ENCODE measurements at regions of chr3 and their contacts with region 1.

Region 1: DNA sequence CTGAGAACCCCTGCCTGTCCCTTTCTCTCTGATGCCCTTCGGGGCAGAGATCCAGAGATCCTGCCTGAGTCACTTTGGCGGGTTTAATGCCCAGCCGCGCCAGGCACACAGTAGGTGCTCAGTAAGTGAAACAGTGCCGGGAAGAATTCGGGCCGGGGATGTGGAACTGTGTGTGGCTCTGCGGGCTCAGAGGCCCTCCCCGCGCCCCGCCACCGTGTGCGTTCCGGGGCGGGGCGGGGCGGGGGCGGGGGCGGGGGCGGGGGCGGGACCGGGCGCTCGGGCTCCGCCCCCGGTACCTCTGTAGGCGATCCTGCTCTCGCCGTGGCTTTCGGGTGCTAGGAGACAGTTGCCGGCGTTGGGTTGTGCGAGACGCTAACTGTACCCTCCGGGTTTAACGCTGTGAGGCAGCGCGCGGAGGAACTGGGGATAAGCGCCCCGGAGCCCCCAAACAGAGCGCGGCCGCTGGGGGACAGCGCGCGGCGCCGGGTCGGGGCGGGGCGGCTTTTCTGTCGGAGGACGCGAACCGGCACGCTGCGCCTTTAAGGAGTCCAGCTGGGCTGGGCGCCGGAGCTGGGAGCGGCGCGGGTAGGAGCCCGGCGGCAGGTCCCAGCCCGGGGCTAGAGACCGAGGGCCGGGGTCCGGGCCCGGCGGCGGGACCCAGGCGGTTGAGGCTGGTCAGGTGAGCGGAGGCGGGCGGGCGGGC is at the start of gene ABHD6:
- DNase-seq: peak; percentile 40
- ATAC-seq: peak; percentile 84
- H3K4me3 ChIP-seq: peak within 1 kb of the TSS; percentile 89 to 95 (median 93)
- H3K27ac ChIP-seq: peak within 1 kb of the TSS; percentile 44
- H3K4me1 ChIP-seq: peaks cover 68% of the 10 kb centered on the region
- H3K27me3 ChIP-seq: peaks cover 1 to 11% of the 10 kb centered on the region in 2 experiments; a peak in 3 of 5 replicates
- CTCF ChIP-seq: peak; percentile 76
- EP300 ChIP-seq: no peak
- POLR2A ChIP-seq: peak in 1 of 2 experiments; percentile 61; a peak in 1 of 4 replicates
- RAD21 ChIP-seq: peak; percentile 83
- total RNA-seq, gene ABHD6: 5.7 and 9.0 TPM in 2 replicates

Region 2: GRCh38 chr3:58288011-58288728 is 50.8 kb after region 1 on chr3:
- CTCF ChIA-PET with region 1: no interaction called
- POLR2A ChIA-PET with region 1: no interaction called
- in situ Hi-C with region 1: no loop called
- intact Hi-C with region 1: loop called (anchors 5 kb)
- DNase-seq: peak; percentile 51
- ATAC-seq: peak; percentile 89
- H3K4me3 ChIP-seq: no peak overlapping the region
- H3K27ac ChIP-seq: no peak overlapping the region
- H3K4me1 ChIP-seq: peaks cover 18% of the 10 kb centered on the region
- H3K27me3 ChIP-seq: no peaks in the 10 kb centered on the region
- CTCF ChIP-seq: peak; percentile 17; the same call in 1 of the 2 replicates
- EP300 ChIP-seq: no peak
- POLR2A ChIP-seq: no peak
- RAD21 ChIP-seq: no peak

Region 3: GRCh38 chr3:58299839-58300516 is 62.6 kb after region 1 on chr3:
- CTCF ChIA-PET with region 1: no interaction called
- POLR2A ChIA-PET with region 1: no interaction called
- in situ Hi-C with region 1: loop called (anchors 5 kb)
- intact Hi-C with region 1: loop called (anchors 5 kb)
- DNase-seq: peak; percentile 25
- ATAC-seq: no peak
- H3K4me3 ChIP-seq: no peak overlapping the region
- H3K27ac ChIP-seq: no peak overlapping the region
- H3K4me1 ChIP-seq: peaks cover 21% of the 10 kb centered on the region
- H3K27me3 ChIP-seq: 0 out of 5 replicates have a peak, but pooled peaks cover 0 to 3% of the 10 kb centered on the region in 2 experiments
- CTCF ChIP-seq: peak; percentile 66
- EP300 ChIP-seq: no peak
- POLR2A ChIP-seq: no peak
- RAD21 ChIP-seq: peak; percentile 63